Activated CD4-positive, alpha-beta T cell treated with anti-CD3 and anti-CD28 coated beads for 36 hours (primary cell): ENCODE measurements at regions of chr1 and their contacts with region 1.

Region 1: GRCh38 chr1:235910357-235911299 is 43.9 kb upstream of the LYST start:
- DNase-seq: peak; percentile 74
- ATAC-seq: peak; percentile 92
- H3K4me3 Mint-ChIP-seq: no peak overlapping the region
- H3K27ac Mint-ChIP-seq: peak overlapping the region; percentile 53
- H3K4me1 Mint-ChIP-seq: peaks cover 32% of the 10 kb centered on the region
- H3K27me3 Mint-ChIP-seq: peaks cover 3% of the 10 kb centered on the region

Region 2: DNA sequence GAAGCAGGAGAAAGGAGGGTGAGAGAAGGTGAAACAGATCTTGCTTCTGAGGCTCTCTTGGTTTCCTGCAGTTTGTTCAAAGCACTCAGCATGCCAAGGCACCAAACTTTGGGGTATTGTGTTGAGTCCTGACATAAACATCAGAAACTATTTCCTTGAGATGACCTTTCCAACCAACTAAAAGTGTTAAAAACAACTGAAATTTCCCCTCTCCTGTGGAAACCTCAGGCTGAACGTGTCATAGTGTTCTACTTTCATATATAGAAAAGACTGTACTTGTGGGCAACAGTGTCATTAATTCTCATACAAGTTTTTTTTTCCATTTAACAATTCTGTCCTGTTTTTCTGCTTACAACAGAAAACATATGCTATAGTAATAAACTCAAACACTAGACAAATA is 37.6 kb before region 1 on chr1:
- CTCF ChIA-PET with region 1: no interaction called
- POLR2A ChIA-PET with region 1: no interaction called
- intact Hi-C with region 1: loop called in 1 of 2 experiments (anchors 1 kb)
- DNase-seq: peak; percentile 50
- ATAC-seq: peak; percentile 62
- H3K4me3 Mint-ChIP-seq: peak overlapping the region; percentile 57
- H3K27ac Mint-ChIP-seq: peak overlapping the region; percentile 98
- H3K4me1 Mint-ChIP-seq: peaks cover 69% of the 10 kb centered on the region
- H3K27me3 Mint-ChIP-seq: no peaks in the 10 kb centered on the region

Region 3: GRCh38 chr1:235923466-235924021 is 12.9 kb after region 1 on chr1:
- CTCF ChIA-PET with region 1: no interaction called
- POLR2A ChIA-PET with region 1: no interaction called
- intact Hi-C with region 1: no loop called
- DNase-seq: peak; percentile 25
- ATAC-seq: peak; percentile 78
- H3K4me3 Mint-ChIP-seq: no peak overlapping the region
- H3K27ac Mint-ChIP-seq: peak overlapping the region; percentile 2
- H3K4me1 Mint-ChIP-seq: peaks cover 40% of the 10 kb centered on the region
- H3K27me3 Mint-ChIP-seq: no peaks in the 10 kb centered on the region

Region 4: GRCh38 chr1:235954306-235955283 is 44.0 kb after region 1 on chr1:
- CTCF ChIA-PET with region 1: no interaction called
- POLR2A ChIA-PET with region 1: no interaction called
- intact Hi-C with region 1: loop called (anchors 2 to 5 kb)
- DNase-seq: peak; percentile 62
- ATAC-seq: peak; percentile 46
- H3K4me3 Mint-ChIP-seq: no peak overlapping the region
- H3K27ac Mint-ChIP-seq: no peak overlapping the region
- H3K4me1 Mint-ChIP-seq: peaks cover 34% of the 10 kb centered on the region
- H3K27me3 Mint-ChIP-seq: no peaks in the 10 kb centered on the region